ENCODE measurements at regions of chr3 and their contacts with region 1.

Region 1: DNA sequence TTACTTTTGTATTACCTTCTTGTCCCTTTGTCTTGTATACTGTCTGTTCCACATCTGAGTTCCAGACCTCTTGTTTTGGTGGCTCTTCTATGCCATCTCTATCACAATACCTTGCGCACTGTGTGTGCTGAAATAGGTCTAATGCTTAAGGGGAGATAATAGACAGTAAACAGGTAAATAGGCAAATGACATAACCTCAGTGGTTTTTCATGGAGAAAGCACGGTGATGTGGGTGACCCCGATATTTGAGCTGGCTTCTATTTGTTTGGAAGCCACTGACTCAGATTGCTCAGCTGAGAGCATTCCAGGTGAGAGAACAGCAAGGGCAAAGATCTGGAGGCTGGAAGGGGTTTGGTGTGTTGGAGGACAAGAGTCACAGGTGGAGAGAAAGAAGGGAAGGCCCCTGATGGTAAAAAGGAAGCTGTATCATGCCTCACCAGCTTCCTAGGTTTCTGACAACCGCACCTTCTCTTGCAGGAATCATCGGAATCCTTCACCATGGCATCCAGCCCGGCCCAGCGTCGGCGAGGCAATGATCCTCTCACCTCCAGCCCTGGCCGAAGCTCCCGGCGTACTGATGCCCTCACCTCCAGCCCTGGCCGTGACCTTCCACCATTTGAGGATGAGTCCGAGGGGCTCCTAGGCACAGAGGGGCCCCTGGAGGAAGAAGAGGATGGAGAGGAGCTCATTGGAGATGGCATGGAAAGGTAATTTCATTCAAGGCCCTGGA is 795 bp downstream of the MCM2 start:
- DNase-seq: no peak
- ATAC-seq: no peak
- H3K4me3 ChIP-seq: peak overlapping the region; percentile 53 to 60
- H3K4me3 Mint-ChIP-seq: peak overlapping the region; percentile 78
- H3K27ac ChIP-seq: peak overlapping the region; percentile 53 to 69
- H3K27ac Mint-ChIP-seq: peak overlapping the region; percentile 76
- H3K4me1 ChIP-seq: peaks cover 11% of the 10 kb centered on the region
- H3K4me1 Mint-ChIP-seq: peaks cover 15% of the 10 kb centered on the region
- H3K27me3 ChIP-seq: no peaks in the 10 kb centered on the region
- H3K27me3 Mint-ChIP-seq: no peaks in the 10 kb centered on the region
- CTCF ChIP-seq: no peak

Region 2: GRCh38 chr3:127628788-127629466 is 29.9 kb after region 1 on chr3 and contains the start of gene PODXL2:
- CTCF ChIA-PET with region 1: interaction called, 3 read pairs
- POLR2A ChIA-PET with region 1: interaction called, 3 read pairs
- intact Hi-C with region 1: loop called (anchors 2 kb)
- DNase-seq: peak in 7 of 9 experiments; percentile 5 to 70 (median 27)
- ATAC-seq: peak; percentile 27
- H3K4me3 ChIP-seq: peak within 1 kb of the TSS; percentile 40 to 54
- H3K4me3 Mint-ChIP-seq: peak within 1 kb of the TSS; percentile 89
- H3K27ac ChIP-seq: no peak within 1 kb of the TSS
- H3K27ac Mint-ChIP-seq: peak within 1 kb of the TSS; percentile 83
- H3K4me1 ChIP-seq: peaks cover 14% of the 10 kb centered on the region
- H3K4me1 Mint-ChIP-seq: peaks cover 40% of the 10 kb centered on the region
- H3K27me3 ChIP-seq: peaks cover 2 to 9% of the 10 kb centered on the region in 2 experiments
- H3K27me3 Mint-ChIP-seq: peaks cover 37% of the 10 kb centered on the region
- CTCF ChIP-seq: no peak
- total RNA-seq, gene PODXL2: 2.7 to 3.2 TPM

Measured in CD8-positive, alpha-beta T cell (primary cell).